ENCODE measurements at regions of chr6 and their contacts with region 1.

Region 1: DNA sequence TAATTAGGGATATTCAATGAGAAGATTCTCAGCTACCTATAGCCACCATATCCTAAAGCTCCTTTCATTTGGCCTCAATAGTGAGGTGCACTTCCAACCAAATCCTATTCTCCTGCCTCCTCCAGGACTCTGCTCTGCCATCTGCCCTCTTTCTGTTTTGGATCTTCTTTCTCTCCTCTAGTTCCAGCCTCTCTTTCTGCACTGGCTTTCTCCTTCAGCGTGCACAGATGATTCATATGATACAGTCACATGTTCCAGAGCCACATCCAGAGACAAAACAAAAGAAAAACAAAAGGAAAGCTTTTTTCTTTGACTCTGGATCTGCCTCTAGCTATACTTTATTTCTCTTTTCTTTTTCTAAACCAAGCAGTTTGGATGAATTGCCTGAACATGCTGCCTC is 531.9 kb upstream of the MAN1A1 start:
- DNase-seq: peak; percentile 21
- H3K4me3 ChIP-seq: no peak overlapping the region
- H3K27ac ChIP-seq: no peak overlapping the region
- H3K4me1 ChIP-seq: peaks cover 8% of the 10 kb centered on the region
- H3K27me3 ChIP-seq: no peaks in the 10 kb centered on the region
- CTCF ChIP-seq: no peak

Region 2: GRCh38 chr6:119830494-119831295 is 50.7 kb before region 1 on chr6:
- CTCF ChIA-PET with region 1: no interaction called
- dilution Hi-C with region 1: no loop called
- in situ Hi-C with region 1: no loop called
- intact Hi-C with region 1: loop called (anchors 1 kb)
- DNase-seq: peak; percentile 97
- H3K4me3 ChIP-seq: no peak overlapping the region
- H3K27ac ChIP-seq: peak overlapping the region; percentile 91
- H3K4me1 ChIP-seq: peaks cover 40% of the 10 kb centered on the region
- H3K27me3 ChIP-seq: no peaks in the 10 kb centered on the region
- CTCF ChIP-seq: no peak

Measured in mammary epithelial cell (primary cell).